Kidney (tissue), 22 donors: ENCODE measurements at regions of chr11 and their contacts with region 1.

Region 1: DNA sequence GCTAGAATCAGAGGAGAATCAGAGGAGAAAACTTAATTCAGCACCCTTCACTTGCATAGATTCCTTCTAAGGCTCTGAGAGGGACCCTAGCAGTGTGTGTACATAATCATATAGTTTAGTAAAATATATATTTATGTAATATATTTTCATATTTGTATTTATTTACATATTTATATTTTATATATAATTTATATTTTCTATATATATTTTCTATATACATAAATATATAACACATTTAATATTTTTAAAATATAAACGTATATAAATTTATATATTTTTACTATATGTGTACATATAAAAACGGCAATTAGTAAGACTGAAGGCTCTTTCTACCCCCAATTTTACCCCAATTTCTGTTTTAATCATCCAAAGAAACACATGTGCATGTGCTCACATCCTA is 80.3 kb downstream of the NXPE2 start:
- DNase-seq: no peak
- H3K4me3 ChIP-seq: no peak overlapping the region
- H3K27ac ChIP-seq: no peak overlapping the region
- H3K4me1 ChIP-seq: no peaks in the 10 kb centered on the region
- H3K27me3 ChIP-seq: no peaks in the 10 kb centered on the region
- CTCF ChIP-seq: no peak

Region 2: GRCh38 chr11:114340311-114341131 is 418.1 kb before region 1 on chr11:
- intact Hi-C with region 1: loop called (anchors 10 kb)
- DNase-seq: peak in 4 of 5 donors; percentile 52 to 80 (median 70)
- H3K4me3 ChIP-seq: peak overlapping the region in 2 of 3 donors; percentile 13 to 63
- H3K27ac ChIP-seq: peak overlapping the region in 1 of 2 donors; percentile 74
- H3K4me1 ChIP-seq: peaks cover 0 to 3% (median 0%) of the 10 kb centered on the region in 3 donors
- H3K27me3 ChIP-seq: no peaks in the 10 kb centered on the region
- CTCF ChIP-seq: peak; percentile 85

Region 3: DNA sequence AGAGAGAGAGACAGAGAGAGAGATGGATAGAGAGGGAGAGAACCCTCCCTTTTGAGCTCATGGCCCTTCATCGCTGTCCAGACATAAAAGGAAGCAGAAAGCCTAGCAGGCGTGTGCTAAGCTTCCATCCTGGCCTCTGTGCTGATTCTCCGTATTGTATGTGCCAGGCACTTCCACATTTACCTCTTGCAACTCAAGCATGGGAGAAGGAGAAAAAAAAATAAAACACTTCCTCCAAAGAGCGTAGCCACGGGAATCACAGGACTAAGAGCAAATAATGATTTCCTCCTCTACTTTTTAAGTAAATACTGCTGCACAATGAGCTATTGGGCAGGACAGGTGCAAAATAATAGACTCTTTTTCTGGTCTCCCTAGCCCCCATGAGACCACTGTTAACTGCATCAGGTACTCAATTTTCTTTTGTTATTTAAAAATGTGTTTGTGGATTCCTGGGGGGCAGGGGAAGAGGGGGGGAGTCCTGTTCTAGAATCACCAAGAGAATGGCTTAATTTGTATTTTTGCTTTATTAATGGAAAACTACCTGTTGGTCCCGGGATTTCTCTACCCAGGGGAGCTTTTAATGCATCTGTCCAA is 74.0 kb after region 1 on chr11:
- intact Hi-C with region 1: no loop called
- DNase-seq: peak in 1 of 5 donors; percentile 7
- H3K4me3 ChIP-seq: no peak overlapping the region
- H3K27ac ChIP-seq: no peak overlapping the region
- H3K4me1 ChIP-seq: no peaks in the 10 kb centered on the region
- H3K27me3 ChIP-seq: no peaks in the 10 kb centered on the region
- CTCF ChIP-seq: no peak